GM12878 (cell line): ENCODE measurements at regions of chr5 and their contacts with region 1.

Region 1: GRCh38 chr5:180860887-180861822 is at the start of gene ZFP62:
- DNase-seq: peak; percentile 62
- ATAC-seq: peak; percentile 95
- H3K4me3 ChIP-seq: peak within 1 kb of the TSS; percentile 94
- H3K27ac ChIP-seq: peak within 1 kb of the TSS; percentile 77
- H3K4me1 ChIP-seq: no peaks in the 10 kb centered on the region; the same call in 1 of the 2 replicates
- H3K27me3 ChIP-seq: no peaks in the 10 kb centered on the region
- CTCF ChIP-seq: no peak; a peak in 1 of 6 replicates
- EP300 ChIP-seq: 0 out of 4 replicates have a peak, but pooled peaks of 1 of the 2 experiments have one; percentile 11
- POLR2A ChIP-seq: peak; percentile 82
- RAD21 ChIP-seq: no peak
- polyA plus RNA-seq, gene ZFP62: 9.2 to 16.4 TPM

Region 2: DNA sequence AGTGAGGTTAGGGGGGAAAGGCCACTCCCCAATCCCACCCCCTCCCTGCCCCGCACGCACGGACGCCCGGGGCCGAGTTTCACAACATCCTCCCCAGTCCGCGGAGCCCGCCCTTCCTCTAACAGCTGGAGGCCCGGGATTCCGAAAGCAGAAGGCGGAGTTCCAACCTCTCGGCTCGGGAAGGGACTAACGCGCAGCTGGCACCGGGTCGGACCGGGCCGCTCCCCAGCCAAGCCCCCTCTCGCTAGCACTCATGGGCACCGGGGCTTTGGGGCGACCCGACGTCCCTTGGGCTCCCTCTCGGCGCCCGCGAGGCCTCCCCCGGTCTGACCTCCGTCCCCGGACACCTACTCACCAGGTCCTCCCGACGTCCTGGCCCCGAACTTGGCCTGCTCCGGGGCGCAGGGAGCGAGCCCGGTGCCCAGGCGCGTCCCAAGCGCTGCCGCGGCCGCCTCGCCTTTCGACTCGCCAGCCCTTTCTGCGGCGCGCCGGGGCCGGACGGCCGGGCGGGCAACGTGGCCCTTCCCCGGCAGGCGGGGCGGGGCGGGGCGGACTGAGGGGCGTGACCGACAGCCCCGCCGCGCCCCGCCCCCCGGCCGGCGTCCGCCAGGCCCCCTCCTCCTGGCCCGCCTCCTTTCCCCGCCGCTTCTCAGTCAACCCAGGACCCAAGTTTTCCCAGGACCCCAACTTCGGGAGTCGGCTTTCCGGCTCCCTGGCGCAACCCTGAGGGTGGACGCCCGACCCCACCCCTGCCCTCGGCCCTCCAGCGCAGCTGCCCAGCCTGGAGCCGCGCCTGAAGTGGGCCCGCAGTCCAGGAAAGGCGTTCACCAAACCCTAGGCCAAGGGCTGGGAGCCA is 58.6 kb before region 1 on chr5 and contains the start of gene MGAT1:
- CTCF ChIA-PET with region 1: interaction called, 3 read pairs
- POLR2A ChIA-PET with region 1: interaction called, 5 read pairs
- RAD21 ChIA-PET with region 1: interaction called, 4 read pairs
- SMC1A ChIA-PET with region 1: interaction called, 13 read pairs
- in situ Hi-C with region 1: loop called (anchors 5 kb)
- intact Hi-C with region 1: loop called (anchors 2 kb)
- DNase-seq: no peak
- ATAC-seq: peak; percentile 72
- H3K4me3 ChIP-seq: peak within 1 kb of the TSS; percentile 97
- H3K27ac ChIP-seq: peak within 1 kb of the TSS; percentile 94
- H3K4me1 ChIP-seq: peaks cover 43% of the 10 kb centered on the region
- H3K27me3 ChIP-seq: no peaks in the 10 kb centered on the region
- CTCF ChIP-seq: no peak
- EP300 ChIP-seq: no peak
- POLR2A ChIP-seq: peak; percentile 89
- RAD21 ChIP-seq: no peak
- polyA plus RNA-seq, gene MGAT1: 3.1 to 7.7 TPM

Region 3: GRCh38 chr5:180810210-180810958 is 50.8 kb before region 1 on chr5:
- CTCF ChIA-PET with region 1: interaction called, 3 read pairs
- POLR2A ChIA-PET with region 1: interaction called, 8 read pairs
- RAD21 ChIA-PET with region 1: interaction called, 14 read pairs
- SMC1A ChIA-PET with region 1: interaction called, 13 read pairs
- in situ Hi-C with region 1: no loop called
- intact Hi-C with region 1: loop called (anchors 2 kb)
- DNase-seq: peak; percentile 88
- ATAC-seq: peak; percentile 83
- H3K4me3 ChIP-seq: peak overlapping the region; percentile 97
- H3K27ac ChIP-seq: peak overlapping the region; percentile 95
- H3K4me1 ChIP-seq: peaks cover 31% of the 10 kb centered on the region
- H3K27me3 ChIP-seq: no peaks in the 10 kb centered on the region
- CTCF ChIP-seq: no peak
- EP300 ChIP-seq: no peak
- POLR2A ChIP-seq: peak; percentile 94
- RAD21 ChIP-seq: no peak

Region 4: DNA sequence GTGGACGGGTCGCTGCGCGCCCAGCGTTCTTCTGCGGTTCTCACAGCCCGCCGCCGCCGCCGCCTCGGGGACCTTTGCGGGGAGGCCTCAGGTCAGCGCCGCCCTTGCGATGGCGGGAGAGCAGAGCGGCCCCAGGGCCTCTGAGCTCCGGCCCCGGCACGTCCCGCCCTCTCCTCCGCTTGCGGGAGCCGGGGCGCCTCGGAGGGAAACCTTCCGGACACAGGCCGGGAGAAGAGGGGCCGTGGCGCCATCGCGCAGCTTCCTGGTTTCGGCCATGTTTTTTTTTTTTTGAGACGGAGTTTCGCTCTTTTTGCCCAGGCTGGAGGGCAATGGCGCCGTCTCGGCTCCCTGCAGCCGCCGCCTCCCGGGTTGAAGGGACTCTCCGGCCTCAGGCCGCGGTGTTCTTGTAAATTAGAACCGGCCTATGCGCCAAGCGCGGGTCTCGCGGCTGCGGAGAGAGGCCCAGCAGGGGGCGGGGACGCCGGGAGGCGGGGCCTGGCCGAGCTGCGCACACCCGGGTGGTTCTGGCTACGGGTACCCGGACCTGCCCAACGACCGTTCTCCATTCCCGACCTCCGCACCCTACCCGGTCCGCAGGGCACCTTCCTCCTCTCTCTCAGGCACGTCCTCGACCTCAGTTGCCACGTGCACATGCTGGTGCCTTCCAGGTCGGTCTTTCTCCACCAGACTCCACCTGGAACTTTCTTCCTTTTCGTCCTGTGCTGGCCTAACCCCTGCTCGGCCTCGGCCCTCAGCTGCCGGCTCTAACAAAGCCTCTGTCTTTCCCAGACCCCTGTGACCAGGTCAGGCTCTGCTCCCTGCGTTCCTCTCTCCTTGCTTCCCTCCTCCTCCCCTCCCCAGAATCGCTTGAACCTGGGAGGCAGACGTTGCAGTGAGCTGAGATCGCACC is 29.8 kb before region 1 on chr5:
- CTCF ChIA-PET with region 1: interaction called, 3 read pairs
- POLR2A ChIA-PET with region 1: interaction called, 24 read pairs
- RAD21 ChIA-PET with region 1: interaction called, 16 read pairs
- SMC1A ChIA-PET with region 1: interaction called, 11 read pairs
- in situ Hi-C with region 1: no loop called
- intact Hi-C with region 1: loop called (anchors 1 kb)
- DNase-seq: no peak
- ATAC-seq: peak; percentile 90
- H3K4me3 ChIP-seq: peak overlapping the region; percentile 89
- H3K27ac ChIP-seq: peak overlapping the region; percentile 96
- H3K4me1 ChIP-seq: peaks cover 12% of the 10 kb centered on the region; the same call in 1 of the 2 replicates
- H3K27me3 ChIP-seq: no peaks in the 10 kb centered on the region
- CTCF ChIP-seq: 0 out of 6 replicates have a peak, but pooled peaks of 1 of the 3 experiments have one; percentile 5
- EP300 ChIP-seq: no peak
- POLR2A ChIP-seq: peak; percentile 67
- RAD21 ChIP-seq: no peak

Region 5: GRCh38 chr5:180885872-180886418 is 24.8 kb after region 1 on chr5:
- CTCF ChIA-PET with region 1: no interaction called
- POLR2A ChIA-PET with region 1: no interaction called
- RAD21 ChIA-PET with region 1: no interaction called
- SMC1A ChIA-PET with region 1: no interaction called
- in situ Hi-C with region 1: no loop called
- intact Hi-C with region 1: no loop called
- DNase-seq: no peak
- ATAC-seq: no peak
- H3K4me3 ChIP-seq: no peak overlapping the region
- H3K27ac ChIP-seq: no peak overlapping the region
- H3K4me1 ChIP-seq: no peaks in the 10 kb centered on the region
- H3K27me3 ChIP-seq: no peaks in the 10 kb centered on the region
- CTCF ChIP-seq: no peak
- EP300 ChIP-seq: no peak
- POLR2A ChIP-seq: no peak
- RAD21 ChIP-seq: no peak

Region 6: GRCh38 chr5:181088289-181088688 is 227.1 kb after region 1 on chr5:
- CTCF ChIA-PET with region 1: interaction called, 3 read pairs
- POLR2A ChIA-PET with region 1: no interaction called
- RAD21 ChIA-PET with region 1: interaction called, 3 read pairs
- SMC1A ChIA-PET with region 1: no interaction called
- in situ Hi-C with region 1: no loop called
- intact Hi-C with region 1: loop called (anchors 10 kb)
- DNase-seq: no peak
- ATAC-seq: peak; percentile 51; the same call in 2 of the 3 replicates
- H3K4me3 ChIP-seq: no peak overlapping the region
- H3K27ac ChIP-seq: no peak overlapping the region
- H3K4me1 ChIP-seq: no peaks in the 10 kb centered on the region
- H3K27me3 ChIP-seq: peaks cover 0 to 4% of the 10 kb centered on the region in 2 experiments; a peak in 2 of 4 replicates
- CTCF ChIP-seq: peak; percentile 20 to 45 (median 35); a peak in 5 of 6 replicates
- EP300 ChIP-seq: no peak
- POLR2A ChIP-seq: no peak
- RAD21 ChIP-seq: 0 out of 2 replicates have a peak, but pooled peaks have one; percentile 25

Region 7: DNA sequence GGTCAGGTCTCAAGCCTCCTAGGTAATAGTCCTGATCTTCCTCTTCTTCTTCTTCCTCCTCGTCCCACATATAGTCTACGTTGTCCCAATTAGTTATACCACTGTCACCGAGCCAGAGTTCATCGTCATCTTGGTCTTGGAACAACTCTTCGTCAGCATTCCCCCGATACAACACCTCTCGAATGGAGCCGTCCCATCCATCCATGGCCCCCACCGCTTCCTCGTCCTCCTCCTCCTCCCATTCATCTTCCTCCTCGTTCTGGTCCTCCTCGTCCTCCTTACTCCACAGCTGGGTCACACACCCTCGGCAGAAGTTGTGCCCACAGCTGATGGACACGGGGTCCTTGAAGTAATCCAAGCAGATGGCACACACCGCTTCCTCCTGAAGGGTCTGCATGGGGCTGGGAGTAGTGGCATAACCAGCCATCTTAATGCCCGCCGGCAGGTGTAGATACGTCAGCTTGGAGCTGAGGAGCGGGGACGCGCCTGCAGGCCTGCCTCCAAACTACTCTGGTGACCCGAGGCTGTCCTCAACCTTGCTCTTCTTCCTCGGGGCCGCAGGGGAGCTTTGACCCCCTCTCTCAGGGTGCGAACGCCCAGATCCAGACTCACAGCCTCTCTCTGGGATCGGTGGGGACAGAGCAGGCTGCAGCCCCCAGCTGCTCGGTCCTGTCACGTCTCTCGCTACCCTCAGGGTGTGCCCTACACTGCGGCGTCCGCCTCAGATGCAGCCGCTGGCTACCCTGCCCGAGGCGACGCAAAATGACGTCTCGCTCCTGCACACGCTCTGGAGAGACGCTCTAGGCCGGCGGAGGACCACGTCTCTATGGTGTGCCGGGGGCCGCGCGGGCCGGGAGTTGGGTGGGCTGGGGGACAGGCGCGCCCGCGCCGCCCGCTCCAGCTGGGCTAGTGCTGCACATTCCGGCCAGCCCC is 399.5 kb after region 1 on chr5 and contains the start of gene TRIM52:
- CTCF ChIA-PET with region 1: no interaction called
- POLR2A ChIA-PET with region 1: no interaction called
- RAD21 ChIA-PET with region 1: no interaction called
- SMC1A ChIA-PET with region 1: no interaction called
- in situ Hi-C with region 1: no loop called
- intact Hi-C with region 1: loop called (anchors 5 kb)
- DNase-seq: peak; percentile 77
- ATAC-seq: peak; percentile 92
- H3K4me3 ChIP-seq: peak within 1 kb of the TSS; percentile 95
- H3K27ac ChIP-seq: peak within 1 kb of the TSS; percentile 97
- H3K4me1 ChIP-seq: peaks cover 3% of the 10 kb centered on the region; the same call in 1 of the 2 replicates
- H3K27me3 ChIP-seq: no peaks in the 10 kb centered on the region
- CTCF ChIP-seq: peak in 1 of 3 experiments; percentile 19; a peak in 1 of 6 replicates
- EP300 ChIP-seq: no peak
- POLR2A ChIP-seq: peak; percentile 99
- RAD21 ChIP-seq: no peak
- polyA plus RNA-seq, gene TRIM52: 1.4 to 3.4 TPM